ENCODE measurements at regions of chr7 and their contacts with region 1.

Region 1: DNA sequence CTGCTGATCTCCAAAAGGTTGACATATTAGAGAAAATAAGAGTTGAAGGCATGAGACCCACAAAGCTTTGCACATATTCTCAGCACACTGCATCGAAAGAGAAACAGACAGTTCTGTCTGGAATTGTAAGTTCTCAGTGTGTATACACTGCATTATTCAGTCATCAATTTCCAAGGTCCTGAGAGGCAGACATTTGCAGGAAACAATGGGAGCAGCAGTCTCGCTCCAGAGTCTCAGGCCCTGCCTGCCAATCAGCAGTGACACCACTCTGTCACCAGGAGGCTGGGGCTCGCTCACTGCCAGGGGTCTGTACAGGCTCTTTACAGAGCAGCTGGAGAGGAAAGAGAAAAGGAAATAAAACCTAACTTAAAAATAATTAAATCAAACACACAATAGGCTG is 36.3 kb downstream of the JAZF1 start:
- DNase-seq: peak in 8 of 10 donors; percentile 34 to 94 (median 54)

Region 2: GRCh38 chr7:28083164-28083997 is 60.9 kb before region 1 on chr7:
- intact Hi-C with region 1: no loop called
- DNase-seq: no peak

Region 3: GRCh38 chr7:28179120-28180030 is 35.1 kb after region 1 on chr7:
- intact Hi-C with region 1: loop called (anchors 5 kb)
- DNase-seq: peak; percentile 45 to 94 (median 70)

Region 4: GRCh38 chr7:28447071-28447470 is 302.8 kb after region 1 on chr7:
- intact Hi-C with region 1: no loop called
- DNase-seq: no peak